ENCODE measurements at regions of chr12 and their contacts with region 1.

Region 1: DNA sequence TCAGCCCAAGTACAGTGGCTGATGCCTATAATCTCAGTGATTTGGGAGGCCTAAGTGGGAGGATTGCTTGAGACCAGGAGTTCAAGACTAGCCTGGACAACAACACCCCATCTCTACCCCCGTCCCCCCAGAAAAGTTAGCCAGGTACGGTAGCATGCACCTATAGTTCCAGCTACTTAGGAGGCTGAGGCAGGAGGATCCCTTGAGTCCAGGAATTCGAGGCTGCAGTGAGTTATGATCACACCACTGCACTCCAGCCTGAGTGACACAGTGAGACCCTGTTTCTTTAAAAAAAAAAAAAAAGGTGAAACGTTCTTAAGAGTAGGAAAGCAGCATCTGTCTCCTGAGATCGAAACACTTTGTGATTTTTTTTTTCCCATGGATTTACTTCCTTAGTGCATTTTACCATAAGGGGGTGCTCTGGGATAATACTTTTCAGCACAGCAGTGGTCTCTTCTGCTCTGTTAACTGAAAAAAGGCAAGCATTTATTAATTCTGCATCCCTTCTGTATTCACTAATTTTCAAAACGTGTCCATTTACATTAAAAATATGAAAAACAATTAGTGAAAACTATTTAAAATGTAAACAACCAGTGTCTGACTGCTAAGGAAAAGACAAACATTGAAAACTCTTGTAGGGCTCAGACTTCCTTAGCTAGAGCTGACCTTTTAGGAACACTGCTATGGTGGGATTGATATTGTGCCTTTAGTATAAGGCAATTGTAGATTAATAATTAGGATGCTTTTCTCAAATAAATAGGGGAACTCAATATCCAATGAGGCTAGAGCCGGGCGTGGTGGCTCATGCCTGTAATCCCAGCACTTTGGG is 31.2 kb upstream of the USP44 start:
- DNase-seq: no peak
- ATAC-seq: peak; percentile 54

Region 2: GRCh38 chr12:95815635-95816212 is 233.3 kb after region 1 on chr12:
- intact Hi-C with region 1: loop called in 1 of 2 experiments (anchors 5 kb)
- DNase-seq: no peak
- ATAC-seq: peak; percentile 71